A549 (cell line): ENCODE measurements at regions of chr6 and their contacts with region 1.

Region 1: GRCh38 chr6:37207903-37208456 is 38.0 kb downstream of the PIM1 start:
- DNase-seq: peak; percentile 76 to 83
- ATAC-seq: peak; percentile 84 to 91
- H3K4me3 ChIP-seq: no peak overlapping the region
- H3K27ac ChIP-seq: no peak overlapping the region
- H3K4me1 ChIP-seq: peaks cover 29% of the 10 kb centered on the region
- CTCF ChIP-seq: peak; percentile 63
- EP300 ChIP-seq: no peak
- POLR2A ChIP-seq: no peak
- RAD21 ChIP-seq: peak; percentile 61 to 67

Region 2: DNA sequence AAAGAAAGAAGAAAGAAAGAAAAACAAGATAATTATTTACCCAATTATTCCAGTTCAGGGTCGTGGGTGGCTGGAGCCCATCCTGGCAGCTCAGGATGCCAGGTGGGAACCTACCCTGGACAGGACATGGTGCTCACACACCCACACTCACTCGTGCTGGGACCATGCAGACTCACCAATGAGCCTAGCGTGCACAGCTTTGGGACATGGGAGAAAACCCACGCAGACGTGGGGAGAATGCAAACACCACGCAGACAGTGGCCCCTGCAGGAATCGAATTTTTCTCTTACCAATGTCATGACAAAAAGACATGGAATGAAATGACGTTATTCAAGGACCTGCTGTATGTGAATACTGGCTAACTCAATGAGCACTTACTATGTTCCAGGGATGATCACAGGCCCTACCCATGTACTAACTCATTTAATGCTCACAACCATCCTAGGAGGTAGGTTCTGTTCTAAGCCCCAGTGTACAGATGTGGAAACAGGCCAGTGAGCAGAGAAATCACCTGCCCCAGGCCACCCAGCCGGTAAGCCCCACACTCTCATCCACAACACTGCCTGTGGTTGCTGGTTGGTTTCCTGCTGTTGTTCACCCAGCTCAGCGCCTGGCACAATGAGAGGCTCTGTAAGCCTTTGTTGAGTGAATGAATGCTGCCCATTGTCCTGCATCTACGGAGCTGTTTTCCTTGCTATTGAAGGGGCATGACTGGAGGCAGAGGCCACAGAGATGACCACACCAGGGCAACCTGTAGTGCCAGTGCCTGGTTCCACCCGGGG is 260.2 kb before region 1 on chr6:
- CTCF ChIA-PET with region 1: no interaction called
- POLR2A ChIA-PET with region 1: no interaction called
- DNase-seq: no peak
- ATAC-seq: no peak; a peak in 1 of 6 replicates
- H3K4me3 ChIP-seq: no peak overlapping the region
- H3K27ac ChIP-seq: no peak overlapping the region
- H3K4me1 ChIP-seq: no peaks in the 10 kb centered on the region
- CTCF ChIP-seq: no peak
- EP300 ChIP-seq: no peak
- POLR2A ChIP-seq: no peak
- RAD21 ChIP-seq: no peak

Region 3: GRCh38 chr6:37137201-37138090 is 70.5 kb before region 1 on chr6:
- CTCF ChIA-PET with region 1: no interaction called
- POLR2A ChIA-PET with region 1: interaction called, 13 read pairs
- DNase-seq: peak; percentile 85 to 94
- ATAC-seq: peak; percentile 68 to 76
- H3K4me3 ChIP-seq: peak overlapping the region; percentile 32
- H3K27ac ChIP-seq: peak overlapping the region; percentile 93 to 96
- H3K4me1 ChIP-seq: peaks cover 82% of the 10 kb centered on the region
- CTCF ChIP-seq: no peak
- EP300 ChIP-seq: peak; percentile 47 to 60; a peak in 2 of 5 replicates
- POLR2A ChIP-seq: no peak
- RAD21 ChIP-seq: no peak; a peak in 2 of 5 replicates